Prostate gland (tissue), 2 donors: ENCODE measurements at regions of chr9 and their contacts with region 1.

Region 1: DNA sequence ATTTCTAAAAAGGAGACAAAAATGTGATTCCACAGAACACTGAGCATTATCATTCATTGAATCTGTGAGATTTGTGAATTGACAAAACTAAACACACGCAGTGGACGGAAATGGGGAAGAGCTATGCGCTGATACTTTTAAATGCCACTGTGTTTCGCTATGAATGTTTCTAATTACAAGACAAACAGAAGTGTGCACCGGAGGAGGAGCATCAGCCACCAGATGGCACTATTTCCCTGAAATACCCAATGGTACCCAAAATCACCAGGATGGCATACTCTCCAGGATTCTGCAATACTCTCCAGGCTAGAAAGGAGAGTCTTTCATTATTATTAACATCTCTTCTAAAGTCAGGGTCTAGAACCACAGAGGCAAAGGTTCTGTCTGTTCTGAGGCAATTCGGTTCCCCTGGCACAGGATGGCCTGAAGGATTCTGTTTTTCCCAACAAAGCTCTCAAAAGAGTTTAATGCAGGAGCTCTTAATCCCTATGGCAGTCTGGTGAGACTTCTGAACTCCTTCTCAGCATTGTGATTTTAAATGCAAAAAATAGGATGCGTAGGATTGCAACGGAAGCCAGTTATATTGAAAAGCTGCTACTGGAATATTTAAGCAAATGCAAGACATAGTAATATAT is 13.8 kb upstream of the PUM3 start:
- DNase-seq: peak; percentile 65
- H3K4me3 ChIP-seq: no peak overlapping the region
- H3K27ac ChIP-seq: no peak overlapping the region
- H3K4me1 ChIP-seq: no peaks in the 10 kb centered on the region
- H3K27me3 ChIP-seq: no peaks in the 10 kb centered on the region
- CTCF ChIP-seq: peak; percentile 65 to 81 (median 68)
- POLR2A ChIP-seq: no peak

Region 2: DNA sequence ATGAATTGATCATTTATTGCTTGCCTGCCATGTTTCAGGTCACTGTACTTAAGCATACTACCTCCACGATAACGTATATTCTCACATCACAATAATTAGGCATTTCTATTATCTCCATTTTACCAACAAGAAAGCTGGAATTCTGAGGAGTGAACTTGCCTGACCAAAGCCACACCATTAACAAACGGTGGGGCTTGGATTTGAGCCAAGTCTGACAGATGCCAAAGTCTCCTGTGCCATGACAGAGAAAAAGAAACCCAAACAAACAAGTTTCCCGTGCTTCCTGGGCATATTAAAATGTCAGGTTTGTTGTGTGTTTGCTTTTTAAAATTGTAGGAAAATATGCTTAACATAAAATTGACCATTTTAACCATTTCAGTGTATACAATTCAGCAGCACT is 181.2 kb before region 1 on chr9:
- intact Hi-C with region 1: no loop called
- DNase-seq: no peak
- H3K4me3 ChIP-seq: no peak overlapping the region
- H3K27ac ChIP-seq: peak overlapping the region in 1 of 2 donors; percentile 74
- H3K4me1 ChIP-seq: peaks cover 5% of the 10 kb centered on the region
- H3K27me3 ChIP-seq: no peaks in the 10 kb centered on the region
- CTCF ChIP-seq: no peak
- POLR2A ChIP-seq: no peak

Region 3: DNA sequence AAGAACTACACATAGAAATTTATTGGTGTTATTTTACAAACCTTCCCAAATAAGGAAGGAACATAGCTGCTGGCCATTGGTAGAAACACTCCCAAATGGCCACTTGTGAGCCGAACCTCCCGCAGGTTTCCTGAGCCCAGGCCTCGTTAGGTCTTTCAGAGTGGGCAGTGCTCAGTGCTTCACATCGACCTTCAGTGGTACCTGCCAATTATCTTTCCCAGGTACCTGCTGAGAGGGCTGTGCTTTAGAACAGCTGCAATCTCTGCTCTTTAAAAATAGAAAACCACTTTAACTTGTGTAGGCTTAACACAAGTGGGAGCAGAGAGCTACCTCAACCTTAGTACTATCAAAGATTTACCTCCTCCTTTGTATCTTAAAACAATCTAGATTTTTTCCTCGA is 334.0 kb after region 1 on chr9:
- intact Hi-C with region 1: loop called (anchors 10 kb)
- DNase-seq: no peak
- H3K4me3 ChIP-seq: no peak overlapping the region
- H3K27ac ChIP-seq: no peak overlapping the region
- H3K4me1 ChIP-seq: no peaks in the 10 kb centered on the region
- H3K27me3 ChIP-seq: no peaks in the 10 kb centered on the region
- CTCF ChIP-seq: no peak
- POLR2A ChIP-seq: no peak

Region 4: GRCh38 chr9:4375424-4376200 is 1517.9 kb after region 1 on chr9:
- intact Hi-C with region 1: loop called (anchors 10 kb)
- DNase-seq: peak; percentile 7
- H3K4me3 ChIP-seq: no peak overlapping the region
- H3K27ac ChIP-seq: peak overlapping the region in 1 of 2 donors; percentile 7
- H3K4me1 ChIP-seq: no peaks in the 10 kb centered on the region
- H3K27me3 ChIP-seq: no peaks in the 10 kb centered on the region
- CTCF ChIP-seq: peak in 3 of 4 experiments; percentile 54 to 71 (median 61)
- POLR2A ChIP-seq: no peak